ENCODE measurements at regions of chr2 and their contacts with region 1.

Region 1: GRCh38 chr2:172253190-172254052 is 150.7 kb upstream of the DLX2 start:
- DNase-seq: peak; percentile 100
- ATAC-seq: peak; percentile 77
- H3K4me3 ChIP-seq: peak overlapping the region in 1 of 2 experiments; percentile 40
- H3K27ac ChIP-seq: peak overlapping the region; percentile 96
- H3K4me1 ChIP-seq: peaks cover 64 to 86% of the 10 kb centered on the region in 2 experiments
- H3K27me3 ChIP-seq: no peaks in the 10 kb centered on the region
- CTCF ChIP-seq: 0 out of 6 replicates have a peak, but pooled peaks of 1 of the 3 experiments have one; percentile 8
- POLR2A ChIP-seq: peak; percentile 50
- RAD21 ChIP-seq: no peak

Region 2: GRCh38 chr2:172427256-172427989 is 174.0 kb after region 1 on chr2 and contains the start of gene ITGA6:
- CTCF ChIA-PET with region 1: interaction called, 4 read pairs
- POLR2A ChIA-PET with region 1: interaction called, 19 read pairs
- RAD21 ChIA-PET with region 1: interaction called in 1 of 2 experiments, 3 read pairs
- intact Hi-C with region 1: loop called (anchors 5 kb)
- DNase-seq: peak; percentile 83
- ATAC-seq: peak; percentile 85
- H3K4me3 ChIP-seq: peak within 1 kb of the TSS; percentile 60 to 73
- H3K27ac ChIP-seq: peak within 1 kb of the TSS; percentile 84
- H3K4me1 ChIP-seq: peaks cover 31 to 48% of the 10 kb centered on the region in 2 experiments
- H3K27me3 ChIP-seq: no peaks in the 10 kb centered on the region
- CTCF ChIP-seq: peak in 1 of 3 experiments; percentile 13; a peak in 1 of 6 replicates
- POLR2A ChIP-seq: peak; percentile 94
- RAD21 ChIP-seq: peak; percentile 46
- total RNA-seq, gene ITGA6: 93.1 TPM

Region 3: GRCh38 chr2:173571021-173571882 is 1317.8 kb after region 1 on chr2:
- CTCF ChIA-PET with region 1: no interaction called
- POLR2A ChIA-PET with region 1: no interaction called
- RAD21 ChIA-PET with region 1: no interaction called
- intact Hi-C with region 1: no loop called
- DNase-seq: peak; percentile 24
- ATAC-seq: peak; percentile 73
- H3K4me3 ChIP-seq: no peak overlapping the region
- H3K27ac ChIP-seq: no peak overlapping the region
- H3K4me1 ChIP-seq: peaks cover 16 to 35% of the 10 kb centered on the region in 2 experiments
- H3K27me3 ChIP-seq: no peaks in the 10 kb centered on the region
- CTCF ChIP-seq: peak; percentile 30 to 66 (median 50); a peak in 4 of 6 replicates
- POLR2A ChIP-seq: no peak
- RAD21 ChIP-seq: peak; percentile 82